Common myeloid progenitor, CD34-positive (primary cell): ENCODE measurements at regions of chr4 and their contacts with region 1.

Region 1: GRCh38 chr4:140884431-140885058 is 128.4 kb upstream of the TBC1D9 start:
- DNase-seq: peak; percentile 65 to 80 (median 75)
- H3K4me3 ChIP-seq: no peak overlapping the region
- H3K27ac ChIP-seq: no peak overlapping the region
- H3K4me1 ChIP-seq: no peaks in the 10 kb centered on the region
- H3K27me3 ChIP-seq: no peaks in the 10 kb centered on the region

Region 2: DNA sequence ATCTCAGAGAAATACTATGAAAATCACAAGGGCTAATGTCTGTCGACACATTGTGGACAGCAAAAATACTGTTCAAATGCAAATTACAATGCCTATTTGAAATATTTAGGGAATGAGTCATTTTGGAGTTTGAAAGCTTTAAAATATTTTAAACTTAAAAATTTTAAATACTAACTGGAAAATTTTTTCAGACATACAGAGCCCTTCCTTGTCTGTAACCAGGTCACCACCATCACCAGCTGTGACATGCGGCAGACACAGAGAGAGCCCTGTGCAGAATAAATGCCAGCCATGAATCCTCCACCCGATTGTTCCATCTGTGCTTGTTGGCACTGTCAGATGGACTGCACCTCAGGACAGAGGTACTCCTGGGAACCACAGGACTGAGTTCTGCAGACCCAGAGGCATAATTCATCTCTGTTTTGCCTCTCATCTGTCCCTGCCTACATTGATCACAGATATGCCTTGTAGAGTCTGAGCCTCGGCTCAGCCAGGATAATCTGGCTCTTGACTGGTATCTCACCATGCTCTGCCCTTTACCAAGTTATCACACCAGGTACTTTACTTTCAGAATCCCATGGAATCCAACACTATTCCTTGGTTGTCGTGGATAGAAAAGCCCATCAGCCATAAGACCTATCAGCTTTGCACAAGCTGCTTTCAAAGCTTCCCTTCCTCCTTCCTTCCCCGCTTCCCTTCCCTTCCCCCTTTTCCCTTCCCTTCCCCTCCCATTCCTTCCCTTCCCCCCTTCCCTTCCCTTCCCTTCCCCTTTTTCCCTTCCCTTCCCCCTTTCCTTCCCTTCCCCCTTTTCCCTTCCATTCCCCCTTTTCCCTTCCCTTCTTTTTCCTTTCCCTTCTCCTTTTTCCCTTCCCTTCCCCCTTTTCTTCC is 195.6 kb before region 1 on chr4:
- CTCF ChIA-PET with region 1: no interaction called
- POLR2A ChIA-PET with region 1: no interaction called
- DNase-seq: no peak
- H3K4me3 ChIP-seq: no peak overlapping the region
- H3K27ac ChIP-seq: no peak overlapping the region
- H3K4me1 ChIP-seq: no peaks in the 10 kb centered on the region
- H3K27me3 ChIP-seq: peaks cover 0 to 2% (median 0%) of the 10 kb centered on the region in 5 experiments

Region 3: GRCh38 chr4:140753329-140753728 is 131.2 kb before region 1 on chr4:
- CTCF ChIA-PET with region 1: no interaction called
- POLR2A ChIA-PET with region 1: no interaction called
- DNase-seq: no peak
- H3K4me3 ChIP-seq: no peak overlapping the region
- H3K27ac ChIP-seq: no peak overlapping the region
- H3K4me1 ChIP-seq: peaks cover 0 to 19% (median 14%) of the 10 kb centered on the region in 4 experiments
- H3K27me3 ChIP-seq: peaks cover 9 to 33% (median 13%) of the 10 kb centered on the region in 5 experiments

Region 4: GRCh38 chr4:140861359-140862176 is 23.0 kb before region 1 on chr4:
- CTCF ChIA-PET with region 1: interaction called, 21 read pairs
- POLR2A ChIA-PET with region 1: no interaction called
- DNase-seq: peak; percentile 87 to 94 (median 91)
- H3K4me3 ChIP-seq: no peak overlapping the region
- H3K27ac ChIP-seq: no peak overlapping the region
- H3K4me1 ChIP-seq: peaks cover 0 to 3% (median 0%) of the 10 kb centered on the region in 4 experiments
- H3K27me3 ChIP-seq: no peaks in the 10 kb centered on the region

Region 5: DNA sequence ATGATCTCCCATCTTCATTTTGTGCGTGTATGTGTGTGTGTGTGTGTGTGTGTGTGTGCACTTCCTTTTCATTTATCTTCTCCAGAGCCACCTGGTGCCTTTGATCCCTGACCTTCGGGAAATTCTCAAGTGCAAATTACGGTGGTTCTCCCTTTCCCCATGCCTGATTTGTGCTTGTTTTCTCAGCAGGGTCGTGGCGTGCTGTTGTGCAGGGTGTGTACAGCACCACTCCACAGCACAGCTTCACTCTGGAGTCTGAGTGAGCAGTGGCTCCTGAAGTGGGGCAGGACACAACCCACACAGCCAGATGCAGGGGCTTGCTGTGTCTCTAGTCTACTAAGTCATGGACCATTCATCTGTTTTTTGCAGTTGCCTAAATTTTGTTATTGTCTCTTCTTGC is 14.1 kb before region 1 on chr4:
- CTCF ChIA-PET with region 1: interaction called, 11 read pairs
- POLR2A ChIA-PET with region 1: no interaction called
- DNase-seq: no peak
- H3K4me3 ChIP-seq: no peak overlapping the region
- H3K27ac ChIP-seq: no peak overlapping the region
- H3K4me1 ChIP-seq: peaks cover 0 to 2% (median 0%) of the 10 kb centered on the region in 4 experiments
- H3K27me3 ChIP-seq: no peaks in the 10 kb centered on the region